Pancreas (tissue), 10 donors: ENCODE measurements at regions of chr9 and their contacts with region 1.

Region 1: DNA sequence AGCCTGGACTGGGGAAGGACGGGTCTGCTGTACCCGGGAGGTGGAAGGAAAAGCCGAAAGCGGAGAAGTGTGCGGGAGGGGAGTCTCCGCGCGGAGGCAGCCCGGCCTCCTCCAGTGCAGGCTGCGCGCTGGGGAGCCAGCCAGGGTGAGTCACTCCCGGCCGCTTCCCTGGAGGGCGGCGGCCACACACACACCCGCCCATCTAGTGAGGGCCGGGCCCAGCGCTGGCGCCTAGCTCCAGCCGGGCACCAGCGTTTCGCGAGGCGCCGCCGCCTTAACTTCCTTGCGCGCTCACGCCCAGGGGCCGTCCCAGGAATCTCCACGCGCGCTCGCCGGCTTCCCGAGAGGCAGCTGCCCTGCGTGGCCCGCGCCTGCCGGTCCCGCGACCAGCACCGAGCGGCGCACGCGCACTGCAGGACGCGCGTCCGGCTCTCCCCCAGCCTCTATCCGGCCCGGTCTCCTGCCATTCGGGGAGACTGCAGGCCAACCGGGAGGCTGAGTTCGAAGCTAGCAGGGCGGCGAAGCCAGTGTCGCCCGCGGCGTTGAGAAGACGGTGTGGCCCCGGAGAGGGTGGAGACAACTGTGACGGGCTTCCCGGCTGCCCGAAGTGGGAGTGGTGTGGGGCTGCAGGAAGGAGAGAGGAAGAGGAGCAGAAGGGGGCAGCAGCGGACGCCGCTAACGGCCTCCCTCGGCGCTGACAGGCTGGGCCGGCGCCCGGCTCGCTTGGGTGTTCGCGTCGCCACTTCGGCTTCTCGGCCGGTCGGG is at the start of gene JAK2:
- DNase-seq: peak; percentile 89 to 95 (median 90)
- ATAC-seq: peak; percentile 88 to 96 (median 93)
- H3K4me3 ChIP-seq: peak within 1 kb of the TSS; percentile 80 to 86 (median 82)
- H3K27ac ChIP-seq: peak within 1 kb of the TSS; percentile 94 to 98 (median 96)
- H3K4me1 ChIP-seq: peaks cover 7 to 34% (median 29%) of the 10 kb centered on the region in 3 donors
- H3K27me3 ChIP-seq: no peaks in the 10 kb centered on the region
- CTCF ChIP-seq: peak in 1 of 4 donors; percentile 34
- total RNA-seq, gene JAK2: 3.1 to 9.1 (median 4.6) TPM

Region 2: GRCh38 chr9:4630836-4631235 is 354.0 kb before region 1 on chr9:
- intact Hi-C with region 1: no loop called
- DNase-seq: no peak
- ATAC-seq: no peak
- H3K4me3 ChIP-seq: no peak overlapping the region
- H3K27ac ChIP-seq: no peak overlapping the region
- H3K4me1 ChIP-seq: no peaks in the 10 kb centered on the region
- H3K27me3 ChIP-seq: no peaks in the 10 kb centered on the region
- CTCF ChIP-seq: no peak

Region 3: GRCh38 chr9:4762108-4762885 is 222.5 kb before region 1 on chr9:
- intact Hi-C with region 1: loop called in 1 of 3 experiments (anchors 10 kb)
- DNase-seq: peak; percentile 57 to 86 (median 76)
- ATAC-seq: peak; percentile 89 to 92 (median 90)
- H3K4me3 ChIP-seq: peak overlapping the region in 2 of 4 donors; percentile 8 to 28
- H3K27ac ChIP-seq: peak overlapping the region in 2 of 4 donors; percentile 24 to 63
- H3K4me1 ChIP-seq: peaks cover 0 to 10% (median 0%) of the 10 kb centered on the region in 3 donors
- H3K27me3 ChIP-seq: no peaks in the 10 kb centered on the region
- CTCF ChIP-seq: peak; percentile 57 to 75 (median 66)